Right cardiac atrium (tissue), 5 donors: ENCODE measurements at regions of chr6 and their contacts with region 1.

Region 1: DNA sequence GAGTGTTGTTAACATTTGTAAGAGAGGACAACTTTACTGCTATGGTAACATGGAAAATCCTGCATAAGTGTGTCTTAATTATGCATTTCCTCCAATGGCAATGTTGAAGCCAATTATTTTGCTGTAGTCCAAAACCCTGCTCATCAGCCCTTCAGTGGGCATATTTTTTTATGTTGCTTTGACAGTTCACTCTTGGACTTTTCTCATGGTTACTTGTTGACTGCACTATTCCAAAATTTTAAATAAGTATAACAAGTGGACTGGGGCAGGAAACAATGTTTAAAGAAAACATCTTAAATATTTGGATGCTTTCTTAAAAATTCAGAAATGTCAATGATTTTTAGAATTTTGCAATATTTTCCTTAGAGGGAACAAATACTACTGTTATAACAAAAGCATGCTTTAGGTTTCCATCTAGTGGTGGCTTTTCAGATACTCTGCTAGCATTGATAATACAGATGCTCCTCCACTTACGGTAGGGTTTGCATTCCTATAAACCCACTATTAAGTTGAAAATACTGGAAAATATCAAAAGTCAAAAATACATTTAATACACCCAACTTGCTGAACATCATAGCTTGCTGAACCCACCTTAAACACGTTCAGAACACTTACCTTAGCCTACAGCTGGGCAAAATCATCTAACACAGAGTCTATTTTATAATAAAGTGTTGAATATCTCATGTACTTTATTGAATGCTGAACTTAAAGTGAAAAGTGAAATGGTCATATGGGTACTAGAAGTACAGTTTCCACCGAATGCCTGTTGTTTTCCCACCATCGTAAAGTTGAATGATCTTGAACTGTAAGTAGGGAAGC is 86.4 kb downstream of the ADGRG6 start:
- DNase-seq: no peak
- ATAC-seq: peak; percentile 63 to 67
- H3K4me3 ChIP-seq: no peak overlapping the region
- H3K27ac ChIP-seq: no peak overlapping the region
- H3K4me1 ChIP-seq: no peaks in the 10 kb centered on the region
- H3K27me3 ChIP-seq: no peaks in the 10 kb centered on the region

Region 2: DNA sequence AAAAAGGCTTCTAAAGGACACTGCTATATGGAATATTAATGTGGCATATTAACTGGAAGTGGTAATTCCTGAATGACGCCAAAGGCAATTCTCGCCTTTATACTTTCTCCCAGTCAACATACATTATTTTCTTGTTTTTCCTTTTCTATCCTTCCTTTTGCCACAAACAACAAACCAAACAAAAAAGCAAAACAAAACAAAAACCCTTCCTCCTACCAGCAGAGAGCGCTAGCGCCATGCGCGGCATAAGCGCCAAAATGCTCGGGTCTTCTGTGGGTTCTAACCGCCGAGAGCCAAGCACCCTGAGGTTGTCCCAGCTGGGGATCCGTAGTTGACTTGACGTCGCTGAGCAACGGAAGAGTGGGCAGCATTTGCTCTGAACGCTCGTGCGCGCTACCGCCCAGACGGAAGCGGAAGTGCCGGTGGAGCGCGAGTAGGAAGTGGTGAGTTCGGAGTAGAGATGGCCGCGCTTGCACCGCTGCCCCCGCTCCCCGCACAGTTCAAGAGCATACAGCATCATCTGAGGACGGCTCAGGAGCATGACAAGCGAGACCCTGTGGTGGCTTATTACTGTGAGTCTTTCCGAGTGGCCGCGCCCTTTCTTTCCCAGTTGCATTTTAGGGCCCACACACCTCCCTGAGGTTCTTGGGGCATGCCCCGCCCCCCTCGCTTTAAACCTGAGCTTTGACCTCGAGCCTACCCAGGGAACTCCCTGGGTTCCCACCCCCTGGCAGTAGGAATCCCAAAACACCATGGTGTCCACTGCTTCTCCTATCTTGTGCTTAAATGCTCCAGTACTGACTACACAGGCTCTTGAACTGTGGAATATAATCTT is 241.2 kb before region 1 on chr6 and contains the starts of genes NMBR and VTA1:
- intact Hi-C with region 1: loop called in 1 of 4 experiments (anchors 5 kb)
- DNase-seq: peak; percentile 97 to 98 (median 98)
- ATAC-seq: peak; percentile 99 to 100
- H3K4me3 ChIP-seq: peak within 1 kb of the TSS; percentile 90
- H3K27ac ChIP-seq: peak within 1 kb of the TSS; percentile 0
- H3K4me1 ChIP-seq: peaks cover 2% of the 10 kb centered on the region
- H3K27me3 ChIP-seq: no peaks in the 10 kb centered on the region
- total RNA-seq, gene NMBR: not detected
- total RNA-seq, gene VTA1: 29.6 to 35.2 (median 30.7) TPM

Region 3: GRCh38 chr6:142155895-142156757 is 232.1 kb before region 1 on chr6:
- intact Hi-C with region 1: loop called in 2 of 4 experiments (anchors 5 kb)
- DNase-seq: no peak
- ATAC-seq: peak in 1 of 2 donors; percentile 66
- H3K4me3 ChIP-seq: no peak overlapping the region
- H3K27ac ChIP-seq: no peak overlapping the region
- H3K4me1 ChIP-seq: no peaks in the 10 kb centered on the region
- H3K27me3 ChIP-seq: no peaks in the 10 kb centered on the region

Region 4: DNA sequence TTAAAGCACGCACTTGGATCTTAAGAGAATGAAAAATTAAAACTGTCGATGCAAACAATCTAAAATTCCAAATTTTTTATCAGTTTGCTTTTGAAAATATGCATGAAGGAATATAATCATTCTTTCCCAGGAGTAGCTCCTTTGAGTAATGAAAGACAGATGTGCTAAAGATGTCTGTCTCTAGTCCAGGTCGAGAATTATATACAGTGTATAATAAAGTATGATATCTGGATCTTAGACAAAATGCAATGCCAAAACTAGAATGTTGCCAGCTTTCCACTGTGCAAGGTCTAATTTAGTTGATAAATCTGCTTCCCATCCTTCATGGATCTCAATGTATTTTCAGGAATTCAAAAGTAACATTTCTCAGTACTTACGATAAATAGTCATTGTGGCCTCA is 151.5 kb before region 1 on chr6:
- intact Hi-C with region 1: loop called in 1 of 4 experiments (anchors 10 kb)
- DNase-seq: no peak
- ATAC-seq: no peak
- H3K4me3 ChIP-seq: no peak overlapping the region
- H3K27ac ChIP-seq: no peak overlapping the region
- H3K4me1 ChIP-seq: no peaks in the 10 kb centered on the region
- H3K27me3 ChIP-seq: no peaks in the 10 kb centered on the region